ENCODE measurements at regions of chr11 and their contacts with region 1.

Region 1: DNA sequence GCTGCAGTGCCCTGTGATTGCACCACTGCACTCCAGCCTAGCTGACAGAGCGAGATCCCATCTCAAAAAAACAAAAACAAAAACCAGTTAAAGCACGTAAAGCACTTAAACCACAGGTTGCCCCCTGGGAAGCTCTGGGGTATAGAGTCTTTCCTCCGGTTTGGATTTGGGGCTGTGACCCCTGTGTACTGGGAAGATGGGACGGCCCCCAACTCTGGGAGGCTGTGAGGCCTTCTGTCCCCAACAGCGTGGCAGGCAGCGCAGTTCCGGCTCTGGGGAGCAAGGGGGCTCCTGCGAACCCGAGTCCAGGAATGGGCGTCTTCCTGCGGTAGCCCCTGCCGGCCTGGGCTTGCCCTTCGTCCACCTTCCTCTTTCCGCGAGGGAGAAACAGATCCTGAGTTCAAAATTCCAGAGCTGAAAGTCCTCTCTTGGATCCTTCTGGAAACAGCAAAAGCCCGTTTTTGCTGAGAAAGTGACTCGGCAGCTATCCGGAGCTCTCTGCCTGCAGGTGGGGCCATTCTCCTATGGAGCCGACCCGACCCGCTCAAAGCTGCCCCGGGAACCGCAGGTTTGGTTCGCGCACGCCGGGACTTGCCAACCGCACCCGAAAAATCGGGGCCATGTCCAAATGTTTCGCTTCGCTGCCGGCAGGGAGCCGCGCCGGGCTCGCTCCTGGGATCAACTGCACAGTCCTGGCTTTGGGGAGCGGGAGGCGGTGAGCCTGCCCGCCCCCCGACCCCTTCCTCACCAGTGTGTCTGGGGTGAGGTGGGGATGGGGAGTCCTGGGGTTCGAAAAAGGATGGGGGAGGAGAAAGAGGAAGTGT is 36.3 kb upstream of the POLA2 start:
- DNase-seq: peak; percentile 53
- H3K4me3 ChIP-seq: peak overlapping the region; percentile 14 to 33
- H3K27ac ChIP-seq: peak overlapping the region; percentile 51 to 73
- H3K4me1 ChIP-seq: no peaks in the 10 kb centered on the region
- H3K27me3 ChIP-seq: no peaks in the 10 kb centered on the region
- CTCF ChIP-seq: peak in 2 of 4 experiments; percentile 61 to 68
- POLR2A ChIP-seq: no peak

Region 2: DNA sequence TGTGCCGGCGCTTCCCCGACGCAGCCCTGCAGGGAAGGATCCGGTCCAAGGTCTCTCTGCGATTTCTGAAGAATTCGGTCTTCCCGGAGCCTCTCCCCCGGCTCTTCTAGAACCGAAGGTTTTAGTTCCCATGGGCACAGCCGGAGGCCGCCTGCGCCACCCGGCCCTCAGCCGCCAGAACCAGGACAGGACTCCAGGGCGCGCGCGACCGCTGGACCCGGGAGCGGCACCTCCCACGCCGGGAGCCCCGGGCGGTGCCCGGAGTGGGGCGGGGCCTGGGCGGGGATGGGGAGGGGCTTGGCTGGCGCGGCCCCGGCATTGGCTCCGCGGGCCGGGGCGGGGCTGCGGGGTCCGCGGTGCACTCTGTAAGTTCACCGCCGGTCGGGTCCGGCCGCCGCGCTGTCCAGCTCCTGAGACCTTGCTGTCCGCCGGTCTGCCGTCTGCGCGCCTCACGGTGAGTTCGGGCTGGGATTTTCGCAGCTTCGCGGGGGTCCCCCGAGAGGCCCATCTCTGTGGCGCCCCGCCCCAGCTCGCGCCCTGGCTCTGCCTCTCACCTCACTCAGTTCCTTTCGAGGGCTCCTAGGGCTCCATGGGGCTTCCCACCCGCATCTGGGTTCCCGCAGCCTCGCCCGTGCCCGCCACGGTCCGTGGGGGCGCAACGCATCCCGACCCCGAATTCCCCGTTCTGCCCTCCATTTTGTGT is 89.2 kb after region 1 on chr11 and contains the start of gene CDC42EP2:
- intact Hi-C with region 1: loop called (anchors 5 kb)
- DNase-seq: peak; percentile 79
- H3K4me3 ChIP-seq: peak within 1 kb of the TSS; percentile 65 to 85
- H3K27ac ChIP-seq: peak within 1 kb of the TSS; percentile 84 to 86
- H3K4me1 ChIP-seq: no peaks in the 10 kb centered on the region
- H3K27me3 ChIP-seq: no peaks in the 10 kb centered on the region
- CTCF ChIP-seq: peak in 2 of 4 experiments; percentile 21 to 41
- POLR2A ChIP-seq: peak; percentile 77
- total RNA-seq, gene CDC42EP2: 7.7 to 8.7 TPM

Measured in prostate gland (tissue), 2 donors.